Right ventricle myocardium superior (tissue), 1 donor: ENCODE measurements at regions of chr19 and their contacts with region 1.

Region 1: DNA sequence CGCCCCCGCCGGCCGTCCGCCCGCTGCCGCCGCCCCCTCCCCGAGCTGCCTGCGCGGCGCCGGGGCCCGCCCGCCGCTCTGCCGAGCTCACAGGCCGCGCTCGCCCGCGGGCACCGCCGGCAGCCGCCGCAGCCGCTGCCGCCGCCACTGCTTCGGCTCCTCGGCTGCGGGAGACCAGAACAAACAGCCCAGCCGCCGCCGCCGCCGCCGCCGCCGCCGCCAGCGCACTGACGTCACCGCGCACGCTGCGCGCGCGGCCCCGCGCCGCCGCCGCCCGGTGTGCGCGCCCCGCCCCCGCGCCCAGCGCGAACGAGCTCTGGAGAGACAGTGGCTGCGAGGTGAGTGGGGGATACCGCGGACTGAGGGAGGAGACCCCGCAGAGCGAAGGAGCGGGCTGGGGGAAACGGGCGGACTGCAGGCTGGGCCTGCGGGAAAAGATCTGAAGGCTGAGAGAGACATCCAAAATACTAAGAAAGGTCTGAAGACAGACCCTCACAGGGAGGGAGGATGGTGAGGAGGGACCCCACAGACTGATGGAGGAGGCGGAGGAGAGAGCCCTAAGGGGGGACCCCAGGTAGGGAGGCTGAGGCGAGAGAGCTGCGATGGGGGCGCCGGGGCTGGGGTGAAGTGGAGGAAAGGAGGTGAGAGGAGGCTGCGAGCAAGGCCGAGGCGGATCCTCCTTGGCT is at the start of gene BRD4:
- DNase-seq: peak; percentile 85
- ATAC-seq: peak; percentile 79
- total RNA-seq, gene BRD4: 55.1 TPM

Region 2: DNA sequence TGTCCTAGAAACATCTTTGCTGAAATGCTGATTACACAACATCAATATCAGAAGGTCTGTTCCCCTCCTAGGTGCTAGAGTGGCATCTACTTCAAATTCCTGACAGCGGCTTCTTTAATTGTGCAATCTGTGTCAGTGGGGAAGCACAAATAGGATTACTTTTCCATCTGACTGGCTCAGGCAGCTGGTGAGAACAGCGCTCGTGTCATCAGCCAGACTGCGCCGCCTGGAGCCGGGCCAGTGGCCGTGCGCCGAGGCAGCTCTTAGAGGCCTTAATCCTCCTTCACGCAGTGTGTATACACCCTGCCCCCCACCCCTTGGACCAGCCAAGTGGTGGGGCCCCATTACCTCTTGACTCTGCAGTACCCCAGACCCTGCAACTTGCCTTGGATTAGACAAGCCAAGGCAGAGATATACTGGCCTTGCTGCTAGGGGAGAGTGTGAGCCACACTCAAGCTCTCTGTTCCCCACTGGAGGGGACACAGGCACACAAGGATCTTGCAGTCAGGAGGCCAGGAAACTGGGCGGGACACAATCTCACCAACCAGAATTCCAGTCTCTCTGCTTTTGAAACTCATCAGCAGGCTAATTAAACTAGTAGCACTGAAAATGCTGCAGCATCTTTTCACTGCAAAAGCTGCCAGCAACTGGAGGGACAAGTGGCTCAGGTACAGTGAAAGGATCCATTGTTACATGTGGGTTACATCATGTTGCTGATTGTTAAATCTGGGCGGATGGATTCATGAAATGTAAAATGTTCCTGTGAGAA is 51.4 kb before region 1 on chr19:
- intact Hi-C with region 1: loop called (anchors 5 kb)
- DNase-seq: peak; percentile 94
- ATAC-seq: peak; percentile 91

Region 3: DNA sequence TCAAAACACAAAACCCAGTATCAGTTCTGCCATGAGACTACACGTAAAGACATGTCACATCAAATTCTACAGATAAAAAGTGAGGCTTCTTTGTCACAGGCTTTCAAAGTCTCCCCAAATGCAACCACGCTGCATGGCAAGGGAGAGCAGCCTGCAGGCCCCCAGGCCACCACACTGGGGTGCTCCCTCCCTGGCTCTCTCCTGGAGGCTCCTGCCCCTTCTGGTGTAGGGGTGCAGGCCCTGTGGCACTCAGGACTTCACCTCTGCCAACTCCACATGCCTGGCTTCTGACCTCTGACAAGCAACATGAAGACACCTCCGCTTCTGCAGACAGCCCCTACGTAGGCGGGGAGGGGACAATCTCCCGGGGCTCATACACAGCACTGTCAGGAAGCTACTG is 32.8 kb after region 1 on chr19:
- intact Hi-C with region 1: loop called (anchors 5 kb)
- DNase-seq: no peak
- ATAC-seq: no peak